Caco-2 (cell line): ENCODE measurements at regions of chr3 and their contacts with region 1.

Region 1: DNA sequence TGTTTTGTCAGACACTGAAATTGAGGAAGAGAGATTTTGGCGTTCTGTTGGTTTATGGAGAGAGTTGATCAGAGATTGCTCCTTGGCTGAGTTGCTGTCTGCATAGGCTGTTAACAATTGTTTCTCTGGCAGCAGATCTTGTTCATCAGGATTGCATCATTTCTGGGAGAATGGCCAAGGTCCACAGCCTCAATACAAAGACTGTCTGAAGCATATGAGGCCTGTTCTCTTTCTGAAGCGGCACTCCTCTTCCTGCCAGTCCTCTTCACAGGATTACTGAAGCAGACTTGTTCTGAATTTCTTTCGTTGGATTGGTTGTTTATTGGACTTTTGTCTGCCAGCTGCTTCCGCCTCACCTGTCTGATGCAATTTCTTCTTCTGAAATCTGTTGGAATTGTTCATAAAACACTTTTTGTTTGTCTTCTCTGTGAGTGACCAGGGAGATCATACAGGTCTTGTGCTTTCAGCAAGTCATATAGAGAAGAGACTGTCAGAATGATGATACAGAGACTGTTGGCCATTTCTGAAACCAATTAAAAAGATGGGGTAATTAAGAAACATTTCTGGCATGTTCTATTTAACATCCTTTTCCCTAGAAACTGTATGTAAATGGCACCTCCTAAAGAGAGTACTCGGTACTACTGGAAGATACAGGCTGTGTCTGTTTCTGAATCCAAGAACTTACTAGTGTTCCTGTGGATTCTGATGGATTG is 25.5 kb downstream of the SETD5 start:
- DNase-seq: peak; percentile 82 to 83
- H3K4me3 ChIP-seq: no peak overlapping the region
- H3K4me3 Mint-ChIP-seq: peak overlapping the region; percentile 69
- H3K27ac Mint-ChIP-seq: peak overlapping the region; percentile 76
- H3K4me1 ChIP-seq: peaks cover 31% of the 10 kb centered on the region
- H3K4me1 Mint-ChIP-seq: peaks cover 29% of the 10 kb centered on the region
- H3K27me3 ChIP-seq: no peaks in the 10 kb centered on the region
- H3K27me3 Mint-ChIP-seq: no peaks in the 10 kb centered on the region
- CTCF ChIP-seq: peak; percentile 44 to 60

Region 2: DNA sequence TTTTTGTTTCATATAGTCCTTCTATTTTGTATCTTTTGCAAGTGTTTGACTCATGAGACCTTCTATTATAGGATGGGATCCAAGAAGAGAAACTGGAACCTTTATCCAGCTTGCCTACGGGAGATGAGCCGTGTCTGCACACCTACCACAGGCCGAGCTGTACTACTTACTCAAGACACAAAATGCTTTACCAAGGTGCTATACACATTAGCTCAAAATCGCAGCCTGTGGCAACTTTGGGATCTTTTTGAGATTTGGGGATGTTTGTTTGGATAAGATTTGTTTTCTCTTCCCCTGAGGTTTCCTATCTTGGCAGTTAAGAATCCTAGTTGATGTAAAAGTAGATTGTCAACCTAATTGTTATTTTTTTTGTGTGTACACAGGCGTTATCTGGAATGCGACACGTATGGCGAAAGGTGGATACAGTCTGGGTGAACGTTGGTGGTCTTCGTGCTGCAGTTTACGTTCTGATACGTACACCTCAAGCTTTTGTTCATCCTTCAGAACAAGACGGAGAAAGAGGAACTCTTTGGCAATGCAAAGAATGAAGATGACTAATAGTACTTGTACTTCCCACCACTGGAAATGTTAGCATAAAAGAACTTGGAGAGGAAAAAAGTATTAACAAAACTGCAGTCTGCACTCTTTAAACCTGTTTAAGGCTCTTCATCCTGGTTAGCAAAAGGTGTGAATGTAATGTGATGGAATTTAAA is 38.6 kb before region 1 on chr3:
- CTCF ChIA-PET with region 1: no interaction called
- POLR2A ChIA-PET with region 1: no interaction called
- intact Hi-C with region 1: loop called (anchors 5 kb)
- DNase-seq: no peak
- H3K4me3 ChIP-seq: no peak overlapping the region
- H3K4me3 Mint-ChIP-seq: no peak overlapping the region
- H3K27ac Mint-ChIP-seq: peak overlapping the region; percentile 1
- H3K4me1 ChIP-seq: no peaks in the 10 kb centered on the region
- H3K4me1 Mint-ChIP-seq: peaks cover 12% of the 10 kb centered on the region
- H3K27me3 ChIP-seq: no peaks in the 10 kb centered on the region
- H3K27me3 Mint-ChIP-seq: no peaks in the 10 kb centered on the region
- CTCF ChIP-seq: no peak

Region 3: GRCh38 chr3:9396700-9397521 is 26.0 kb before region 1 on chr3:
- CTCF ChIA-PET with region 1: interaction called, 5 read pairs
- POLR2A ChIA-PET with region 1: interaction called, 8 read pairs
- intact Hi-C with region 1: loop called (anchors 1 kb)
- DNase-seq: peak; percentile 99
- H3K4me3 ChIP-seq: peak overlapping the region; percentile 91
- H3K4me3 Mint-ChIP-seq: peak overlapping the region; percentile 94
- H3K27ac Mint-ChIP-seq: peak overlapping the region; percentile 95
- H3K4me1 ChIP-seq: peaks cover 32% of the 10 kb centered on the region
- H3K4me1 Mint-ChIP-seq: peaks cover 19% of the 10 kb centered on the region
- H3K27me3 ChIP-seq: no peaks in the 10 kb centered on the region
- H3K27me3 Mint-ChIP-seq: no peaks in the 10 kb centered on the region
- CTCF ChIP-seq: no peak

Region 4: GRCh38 chr3:9536212-9536611 is 113.3 kb after region 1 on chr3:
- CTCF ChIA-PET with region 1: no interaction called
- POLR2A ChIA-PET with region 1: no interaction called
- intact Hi-C with region 1: no loop called
- DNase-seq: no peak
- H3K4me3 ChIP-seq: no peak overlapping the region
- H3K4me3 Mint-ChIP-seq: no peak overlapping the region
- H3K27ac Mint-ChIP-seq: no peak overlapping the region
- H3K4me1 ChIP-seq: no peaks in the 10 kb centered on the region
- H3K4me1 Mint-ChIP-seq: no peaks in the 10 kb centered on the region
- H3K27me3 ChIP-seq: no peaks in the 10 kb centered on the region
- H3K27me3 Mint-ChIP-seq: peaks cover 2% of the 10 kb centered on the region
- CTCF ChIP-seq: no peak